Esophagus muscularis mucosa (tissue), 4 donors: ENCODE measurements at regions of chr3 and their contacts with region 1.

Region 1: GRCh38 chr3:111676211-111677006 is 81.3 kb upstream of the ZBED2 start:
- DNase-seq: no peak
- H3K4me3 ChIP-seq: no peak overlapping the region
- H3K27ac ChIP-seq: no peak overlapping the region
- H3K4me1 ChIP-seq: peaks cover 13 to 18% (median 16%) of the 10 kb centered on the region in 4 donors
- H3K27me3 ChIP-seq: no peaks in the 10 kb centered on the region
- CTCF ChIP-seq: no peak
- EP300 ChIP-seq: no peak
- POLR2A ChIP-seq: no peak

Region 2: DNA sequence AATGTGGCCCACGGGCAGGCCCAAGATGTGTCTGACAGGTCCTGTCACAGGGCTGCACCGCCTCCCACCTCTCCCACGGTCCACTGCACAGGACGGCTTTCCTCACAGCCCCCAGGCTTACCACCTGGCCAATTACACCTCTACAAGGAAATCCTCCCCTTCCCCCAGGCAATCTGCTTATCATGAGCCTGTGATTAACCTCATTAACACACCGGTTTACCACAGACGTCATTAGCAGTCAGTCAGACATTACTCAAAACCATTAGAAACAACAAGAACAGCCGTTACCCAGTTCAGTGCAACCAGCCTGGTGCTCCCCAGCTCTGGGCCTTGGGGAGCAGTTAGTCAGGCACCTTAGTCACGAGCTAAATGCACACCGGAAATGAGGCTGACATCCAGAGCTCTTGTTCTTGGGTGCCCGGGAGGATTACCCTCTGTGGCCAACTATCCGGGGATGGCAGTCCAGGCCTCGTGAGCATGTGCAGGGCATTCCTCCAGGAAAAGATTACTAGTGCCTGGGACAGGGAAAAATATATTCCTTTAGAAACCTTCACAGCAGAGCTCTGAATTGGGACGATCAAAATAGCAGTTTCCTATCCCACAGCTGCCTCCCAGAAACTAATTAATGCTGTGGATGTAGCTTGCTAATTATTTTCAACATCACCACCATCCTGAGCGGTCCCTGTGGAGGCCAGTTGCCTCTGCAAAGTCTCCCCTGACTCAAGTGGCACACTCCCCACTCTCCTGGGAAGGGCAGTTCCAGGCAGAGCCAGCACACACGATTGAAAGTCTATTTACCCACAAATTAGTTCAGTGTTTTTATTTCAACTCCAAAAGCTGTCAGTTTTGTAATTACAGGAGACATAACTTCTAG is 36.1 kb after region 1 on chr3:
- intact Hi-C with region 1: loop called (anchors 5 kb)
- DNase-seq: peak; percentile 81
- H3K4me3 ChIP-seq: no peak overlapping the region
- H3K27ac ChIP-seq: peak overlapping the region in 1 of 4 donors; percentile 30
- H3K4me1 ChIP-seq: peaks cover 3 to 19% (median 12%) of the 10 kb centered on the region in 4 donors
- H3K27me3 ChIP-seq: no peaks in the 10 kb centered on the region
- CTCF ChIP-seq: no peak
- EP300 ChIP-seq: no peak
- POLR2A ChIP-seq: no peak

Region 3: DNA sequence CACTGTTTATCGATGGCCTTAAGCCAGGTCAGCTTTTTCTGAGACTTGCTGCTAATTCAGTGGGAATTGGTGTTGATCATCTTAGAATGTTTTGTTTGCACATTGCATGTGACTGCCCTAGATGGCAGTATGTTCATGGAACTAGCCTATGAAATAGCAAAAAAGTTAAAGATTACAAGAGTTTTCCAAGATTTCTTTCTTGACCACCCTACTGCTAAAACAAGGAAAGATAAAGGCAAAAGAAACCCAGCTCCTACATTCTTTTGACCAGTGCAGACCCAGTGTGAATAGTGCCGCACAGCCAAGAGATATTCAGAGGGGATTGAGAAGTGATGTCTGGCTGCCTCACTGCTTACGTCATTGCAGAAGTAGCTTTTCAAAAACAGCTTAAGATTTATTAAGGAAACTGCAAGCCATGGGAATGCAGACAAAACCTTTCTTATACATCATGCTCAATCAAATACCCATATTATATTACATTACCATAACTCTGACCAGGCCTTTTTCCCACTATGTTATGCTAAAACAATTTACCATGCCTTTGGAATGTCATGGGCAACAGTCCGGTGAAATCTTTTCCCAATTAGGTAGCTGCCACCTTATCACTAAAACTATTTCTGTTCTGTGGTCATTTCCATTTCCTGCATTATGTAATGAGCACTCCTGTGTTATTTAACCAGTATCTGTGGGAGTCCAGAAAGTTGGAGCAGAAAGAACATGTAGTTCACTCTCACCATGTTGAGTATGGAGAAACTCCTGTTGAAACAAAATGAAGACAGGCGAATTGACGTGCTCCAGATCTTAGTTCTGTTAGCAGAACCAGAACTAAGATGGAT is 188.6 kb after region 1 on chr3:
- intact Hi-C with region 1: no loop called
- DNase-seq: no peak
- H3K4me3 ChIP-seq: peak overlapping the region; percentile 0 to 29 (median 14)
- H3K27ac ChIP-seq: peak overlapping the region; percentile 98 to 99 (median 98)
- H3K4me1 ChIP-seq: peaks cover 71 to 90% (median 86%) of the 10 kb centered on the region in 4 donors
- H3K27me3 ChIP-seq: no peaks in the 10 kb centered on the region
- CTCF ChIP-seq: peak in 2 of 3 experiments; percentile 20 to 24
- EP300 ChIP-seq: no peak
- POLR2A ChIP-seq: no peak